CD14-positive monocyte (primary cell): ENCODE measurements at regions of chr7 and their contacts with region 1.

Region 1: DNA sequence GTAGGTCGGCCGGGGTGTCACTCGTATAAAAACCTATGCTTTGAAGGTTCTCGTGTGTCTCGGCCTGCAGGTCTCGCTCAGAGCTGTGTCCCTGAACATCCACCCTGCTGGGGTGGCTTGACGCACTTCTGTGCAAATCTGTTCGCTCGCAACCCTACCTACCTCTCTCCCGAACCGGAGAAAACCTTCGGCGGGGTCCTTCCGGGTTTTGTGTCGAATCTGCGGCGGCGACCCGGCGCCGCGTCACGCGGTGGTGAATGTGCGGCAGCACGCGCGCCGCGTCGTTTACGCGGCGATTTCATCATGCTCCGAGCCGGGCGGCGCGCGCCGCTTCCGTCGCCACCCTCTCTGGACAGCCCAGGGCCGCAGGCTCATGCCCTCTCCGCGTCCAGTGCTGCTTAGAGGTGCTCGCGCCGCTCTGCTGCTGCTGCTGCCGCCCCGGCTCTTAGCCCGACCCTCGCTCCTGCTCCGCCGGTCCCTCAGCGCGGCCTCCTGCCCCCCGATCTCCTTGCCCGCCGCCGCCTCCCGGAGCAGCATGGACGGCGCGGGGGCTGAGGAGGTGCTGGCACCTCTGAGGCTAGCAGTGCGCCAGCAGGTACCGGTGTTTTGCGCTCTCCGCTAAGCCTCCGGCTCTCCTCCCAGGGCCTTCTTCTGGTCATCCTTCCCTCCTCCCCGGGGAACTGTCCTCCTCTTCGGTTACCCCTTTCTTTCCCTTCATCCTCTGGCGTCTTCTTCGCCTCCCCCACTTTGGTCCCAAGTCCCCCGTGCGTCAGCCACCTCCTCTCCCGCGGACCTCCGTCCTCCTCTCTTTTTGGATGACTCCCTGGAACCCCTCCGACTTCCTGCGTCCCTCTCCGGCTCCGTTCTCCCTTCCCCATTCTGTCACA is at the start of gene GARS1:
- DNase-seq: peak; percentile 91 to 94 (median 94)
- H3K4me3 ChIP-seq: peak within 1 kb of the TSS; percentile 58 to 92 (median 91)
- H3K4me3 Mint-ChIP-seq: peak within 1 kb of the TSS; percentile 99 to 100
- H3K27ac ChIP-seq: peak within 1 kb of the TSS; percentile 99 to 100
- H3K27ac Mint-ChIP-seq: peak within 1 kb of the TSS; percentile 98 to 100 (median 99)
- H3K4me1 ChIP-seq: peaks cover 21 to 43% of the 10 kb centered on the region in 2 donors
- H3K4me1 Mint-ChIP-seq: peaks cover 47% of the 10 kb centered on the region
- H3K27me3 ChIP-seq: no peaks in the 10 kb centered on the region
- H3K27me3 Mint-ChIP-seq: no peaks in the 10 kb centered on the region
- CTCF ChIP-seq: no peak
- polyA plus RNA-seq, gene GARS1: 46.0 to 68.4 (median 48.6) TPM

Region 2: DNA sequence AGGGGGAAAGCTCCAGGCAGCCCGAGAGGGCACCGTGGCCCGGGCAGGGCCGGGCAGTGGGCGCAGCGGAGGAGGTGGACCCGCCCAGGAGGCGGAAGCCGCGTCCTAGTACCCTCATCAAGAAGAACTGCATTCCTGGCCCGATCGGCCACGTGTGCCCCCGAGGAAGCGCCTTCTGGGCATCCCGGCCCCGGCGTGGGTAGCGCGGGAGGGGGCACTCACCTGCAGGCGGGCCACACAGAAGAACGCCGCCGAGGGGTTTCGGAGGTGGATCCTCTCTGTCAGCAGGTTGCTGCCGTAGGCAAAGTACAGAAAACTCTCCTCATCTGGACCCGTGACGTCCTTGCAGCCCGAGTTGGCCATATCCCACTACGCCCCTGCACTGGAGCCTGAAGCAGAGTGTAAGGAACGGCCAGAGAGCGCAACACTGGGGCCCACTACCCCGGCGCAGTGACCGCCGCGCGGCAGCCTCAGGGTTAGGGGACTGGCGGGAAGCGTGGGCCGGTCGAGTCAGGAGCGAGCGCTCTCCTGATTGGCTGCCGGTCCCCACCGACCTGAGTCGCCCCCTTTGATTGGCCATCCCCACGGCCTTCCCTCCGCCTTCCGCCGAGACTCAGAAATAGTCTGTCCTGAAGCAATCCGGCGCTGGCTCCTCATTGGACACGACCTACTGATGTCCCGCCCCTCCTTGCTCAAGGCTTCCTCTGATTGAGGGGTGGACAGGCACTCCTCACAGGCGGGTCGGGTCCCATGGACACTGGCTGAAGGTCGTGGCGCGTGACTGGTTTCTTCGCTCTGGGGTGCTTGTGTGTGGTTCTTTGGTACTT is 90.2 kb before region 1 on chr7 and contains the start of gene GGCT:
- intact Hi-C with region 1: loop called in 1 of 2 experiments (anchors 2 kb)
- DNase-seq: peak; percentile 97 to 99 (median 97)
- H3K4me3 ChIP-seq: peak within 1 kb of the TSS; percentile 84 to 99 (median 89)
- H3K4me3 Mint-ChIP-seq: peak within 1 kb of the TSS; percentile 91 to 95
- H3K27ac ChIP-seq: peak within 1 kb of the TSS; percentile 67 to 87
- H3K27ac Mint-ChIP-seq: peak within 1 kb of the TSS; percentile 78 to 94 (median 90)
- H3K4me1 ChIP-seq: peaks cover 24 to 29% of the 10 kb centered on the region in 2 donors
- H3K4me1 Mint-ChIP-seq: peaks cover 30% of the 10 kb centered on the region
- H3K27me3 ChIP-seq: no peaks in the 10 kb centered on the region
- H3K27me3 Mint-ChIP-seq: peaks cover 0 to 1% (median 0%) of the 10 kb centered on the region in 3 donors
- CTCF ChIP-seq: no peak
- polyA plus RNA-seq, gene GGCT: 7.6 to 18.1 (median 10.7) TPM

Region 3: DNA sequence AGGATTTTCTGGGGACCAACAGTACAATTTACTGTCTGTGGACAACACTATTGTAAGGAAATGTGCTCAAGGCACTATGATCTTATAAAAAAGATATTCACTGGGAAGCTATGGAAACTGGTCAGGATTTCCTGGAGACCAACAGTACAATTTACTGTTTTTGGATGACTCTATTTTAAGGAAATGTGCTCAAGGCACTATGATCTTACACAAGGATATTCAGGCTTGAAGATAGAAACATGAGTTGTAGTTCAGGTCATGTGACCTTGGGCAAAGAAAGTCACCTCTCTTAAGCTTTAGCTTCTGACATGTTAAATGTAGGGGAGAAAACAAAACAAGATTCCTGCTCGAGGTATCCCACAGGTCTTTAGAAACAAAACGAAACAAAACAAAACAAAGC is 917.4 kb after region 1 on chr7:
- intact Hi-C with region 1: no loop called
- DNase-seq: no peak
- H3K4me3 ChIP-seq: no peak overlapping the region
- H3K4me3 Mint-ChIP-seq: no peak overlapping the region
- H3K27ac ChIP-seq: no peak overlapping the region
- H3K27ac Mint-ChIP-seq: no peak overlapping the region
- H3K4me1 ChIP-seq: no peaks in the 10 kb centered on the region
- H3K4me1 Mint-ChIP-seq: no peaks in the 10 kb centered on the region
- H3K27me3 ChIP-seq: no peaks in the 10 kb centered on the region
- H3K27me3 Mint-ChIP-seq: peaks cover 0 to 3% (median 0%) of the 10 kb centered on the region in 3 donors
- CTCF ChIP-seq: no peak

Region 4: DNA sequence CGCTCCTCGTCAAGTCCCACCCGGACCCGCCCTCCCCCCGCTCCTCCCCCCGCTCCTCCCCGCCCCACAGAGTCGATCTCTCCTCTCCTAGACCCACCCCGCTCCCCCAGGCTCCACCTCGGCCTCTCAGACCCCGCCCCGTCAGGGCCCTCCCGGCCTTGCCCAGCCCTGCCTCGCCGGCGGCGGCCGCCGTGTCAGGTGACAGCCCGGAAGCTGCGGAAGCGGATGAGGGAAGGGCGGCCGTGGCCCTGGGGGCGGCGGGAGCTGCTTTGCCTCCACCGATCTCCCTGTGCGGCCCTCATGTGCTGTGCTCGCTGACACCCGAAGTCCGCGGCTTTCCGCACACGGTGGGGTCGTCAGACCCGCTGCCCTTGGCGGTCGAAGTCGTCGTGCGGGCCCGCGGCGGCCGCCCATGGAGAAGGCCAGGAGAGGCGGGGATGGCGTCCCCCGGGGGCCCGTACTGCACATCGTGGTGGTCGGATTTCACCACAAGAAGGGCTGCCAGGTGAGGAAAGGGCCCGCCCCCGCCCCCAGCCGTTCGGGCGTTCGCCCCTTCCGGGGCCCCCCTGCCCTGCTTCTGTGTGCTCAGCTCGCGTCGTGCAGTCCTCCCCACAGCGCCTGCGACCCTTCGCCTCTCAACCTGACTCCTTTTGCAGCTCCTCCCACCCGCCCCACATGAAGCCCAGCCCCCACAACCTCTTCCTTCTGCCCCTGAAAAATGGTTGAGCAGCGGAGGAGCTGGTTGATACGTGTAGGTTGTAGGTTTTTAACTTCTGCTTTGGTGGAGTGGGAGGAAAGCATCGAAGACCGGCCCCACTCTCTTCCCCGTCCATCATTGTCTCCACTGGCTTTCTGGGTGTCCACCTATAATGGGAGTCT is 1900.7 kb after region 1 on chr7 and contains the start of gene AVL9:
- intact Hi-C with region 1: loop called in 1 of 2 experiments (anchors 10 kb)
- DNase-seq: peak; percentile 89 to 96 (median 92)
- H3K4me3 ChIP-seq: peak within 1 kb of the TSS; percentile 76 to 94 (median 77)
- H3K4me3 Mint-ChIP-seq: peak within 1 kb of the TSS; percentile 90 to 94
- H3K27ac ChIP-seq: peak within 1 kb of the TSS; percentile 90 to 99
- H3K27ac Mint-ChIP-seq: peak within 1 kb of the TSS; percentile 94 to 99 (median 96)
- H3K4me1 ChIP-seq: peaks cover 13 to 25% of the 10 kb centered on the region in 2 donors
- H3K4me1 Mint-ChIP-seq: peaks cover 37% of the 10 kb centered on the region
- H3K27me3 ChIP-seq: no peaks in the 10 kb centered on the region
- H3K27me3 Mint-ChIP-seq: peaks cover 0 to 5% (median 3%) of the 10 kb centered on the region in 3 donors
- CTCF ChIP-seq: no peak
- polyA plus RNA-seq, gene AVL9: 16.3 to 17.1 (median 16.8) TPM